Left cardiac atrium (tissue), 4 donors: ENCODE measurements at regions of chr7 and their contacts with region 1.

Region 1: GRCh38 chr7:92621026-92621540 is 30.9 kb upstream of the FAM133B start:
- DNase-seq: peak; percentile 71
- ATAC-seq: peak; percentile 86 to 91

Region 2: DNA sequence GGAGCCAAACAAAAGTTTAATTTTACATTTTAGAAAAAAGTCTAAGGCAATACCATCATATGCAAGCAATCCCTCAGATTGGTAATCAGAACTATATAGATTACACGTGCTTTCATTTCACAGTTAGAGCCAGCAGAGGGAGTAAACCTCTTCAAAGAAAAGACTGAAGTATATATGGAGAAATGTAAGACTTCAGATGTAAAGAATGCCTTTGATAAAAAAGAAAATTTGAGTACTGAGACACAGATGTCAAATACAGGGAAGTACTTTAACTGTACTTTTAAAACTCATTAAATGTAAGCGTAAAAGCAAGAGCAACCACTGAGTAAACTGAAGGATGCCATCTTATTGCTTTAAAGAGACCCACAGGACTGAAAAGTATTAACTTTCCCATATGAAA is 70.5 kb after region 1 on chr7:
- intact Hi-C with region 1: loop called in 1 of 2 experiments (anchors 5 kb)
- DNase-seq: no peak
- ATAC-seq: no peak

Region 3: GRCh38 chr7:92988051-92988450 is 367.0 kb after region 1 on chr7:
- intact Hi-C with region 1: loop called in 1 of 2 experiments (anchors 5 kb)
- DNase-seq: no peak
- ATAC-seq: peak; percentile 47 to 62

Region 4: GRCh38 chr7:93055543-93056107 is 434.5 kb after region 1 on chr7:
- intact Hi-C with region 1: loop called (anchors 2 to 10 kb)
- DNase-seq: no peak
- ATAC-seq: peak; percentile 33 to 57